B cell (primary cell): ENCODE measurements at regions of chr12 and their contacts with region 1.

Region 1: DNA sequence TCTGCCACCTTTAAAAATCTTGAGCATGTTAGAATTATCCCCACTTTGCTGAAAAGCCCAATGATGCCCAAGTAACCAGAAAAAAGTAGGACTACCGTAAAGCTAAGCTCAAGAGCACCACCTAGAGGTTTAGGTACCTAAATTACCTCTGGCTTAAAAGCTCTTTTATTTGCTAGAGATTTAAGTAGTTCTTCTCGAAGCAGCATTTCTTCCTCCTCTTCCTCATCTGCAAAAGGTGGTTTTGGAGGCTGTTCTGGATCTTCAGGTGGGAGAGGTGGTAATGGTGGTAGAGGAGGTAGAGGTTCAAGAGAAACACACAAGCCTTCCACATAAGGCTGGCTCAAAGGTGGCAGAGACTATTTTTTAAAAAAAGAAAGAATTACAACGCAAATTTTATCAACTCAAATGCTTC is 26.9 kb downstream of the ZFC3H1 start:
- DNase-seq: peak; percentile 75
- ATAC-seq: peak; percentile 54
- H3K4me3 ChIP-seq: no peak overlapping the region
- H3K4me3 Mint-ChIP-seq: no peak overlapping the region
- H3K27ac ChIP-seq: no peak overlapping the region
- H3K27ac Mint-ChIP-seq: no peak overlapping the region
- H3K4me1 ChIP-seq: no peaks in the 10 kb centered on the region
- H3K4me1 Mint-ChIP-seq: peaks cover 4% of the 10 kb centered on the region
- H3K27me3 ChIP-seq: no peaks in the 10 kb centered on the region
- H3K27me3 Mint-ChIP-seq: no peaks in the 10 kb centered on the region
- CTCF ChIP-seq: peak; percentile 92

Region 2: GRCh38 chr12:71415336-71416231 is 221.1 kb before region 1 on chr12:
- CTCF ChIA-PET with region 1: interaction called, 13 read pairs
- POLR2A ChIA-PET with region 1: no interaction called
- intact Hi-C with region 1: loop called (anchors 1 kb)
- DNase-seq: peak; percentile 63
- ATAC-seq: no peak
- H3K4me3 ChIP-seq: no peak overlapping the region
- H3K4me3 Mint-ChIP-seq: no peak overlapping the region
- H3K27ac ChIP-seq: no peak overlapping the region
- H3K27ac Mint-ChIP-seq: no peak overlapping the region
- H3K4me1 ChIP-seq: no peaks in the 10 kb centered on the region
- H3K4me1 Mint-ChIP-seq: no peaks in the 10 kb centered on the region
- H3K27me3 ChIP-seq: no peaks in the 10 kb centered on the region
- H3K27me3 Mint-ChIP-seq: no peaks in the 10 kb centered on the region
- CTCF ChIP-seq: peak; percentile 84

Region 3: DNA sequence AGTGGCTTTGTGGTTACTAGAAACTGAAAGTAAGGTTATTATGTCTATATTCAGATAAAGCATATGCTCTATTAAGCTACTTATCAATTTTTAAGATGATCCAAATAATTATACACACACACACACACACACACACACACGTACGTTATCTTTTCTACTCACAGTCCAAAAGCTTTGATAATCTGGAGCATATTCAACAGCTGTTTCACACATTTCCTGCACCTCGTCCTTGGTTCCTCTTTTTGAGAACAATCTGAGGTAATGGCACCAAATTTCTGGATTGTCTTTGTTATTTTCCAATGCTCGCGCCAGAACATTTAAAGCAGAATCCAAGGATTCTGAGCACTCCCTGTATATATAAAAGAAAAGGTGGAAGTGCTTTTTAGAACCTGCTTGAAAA is 10.6 kb before region 1 on chr12:
- CTCF ChIA-PET with region 1: interaction called, 28 read pairs
- POLR2A ChIA-PET with region 1: no interaction called
- intact Hi-C with region 1: no loop called
- DNase-seq: peak; percentile 63
- ATAC-seq: peak; percentile 14
- H3K4me3 ChIP-seq: no peak overlapping the region
- H3K4me3 Mint-ChIP-seq: no peak overlapping the region
- H3K27ac ChIP-seq: peak overlapping the region in 1 of 2 donors; percentile 43
- H3K27ac Mint-ChIP-seq: peak overlapping the region; percentile 5
- H3K4me1 ChIP-seq: peaks cover 0 to 7% of the 10 kb centered on the region in 2 donors
- H3K4me1 Mint-ChIP-seq: peaks cover 22% of the 10 kb centered on the region
- H3K27me3 ChIP-seq: no peaks in the 10 kb centered on the region
- H3K27me3 Mint-ChIP-seq: no peaks in the 10 kb centered on the region
- CTCF ChIP-seq: no peak